BJ (cell line): ENCODE measurements at regions of chr12 and their contacts with region 1.

Region 1: GRCh38 chr12:108731866-108732461 is 646 bp upstream of the CORO1C start:
- DNase-seq: peak; percentile 84
- H3K4me3 ChIP-seq: peak overlapping the region; percentile 98
- H3K27me3 ChIP-seq: no peaks in the 10 kb centered on the region
- CTCF ChIP-seq: no peak

Region 2: DNA sequence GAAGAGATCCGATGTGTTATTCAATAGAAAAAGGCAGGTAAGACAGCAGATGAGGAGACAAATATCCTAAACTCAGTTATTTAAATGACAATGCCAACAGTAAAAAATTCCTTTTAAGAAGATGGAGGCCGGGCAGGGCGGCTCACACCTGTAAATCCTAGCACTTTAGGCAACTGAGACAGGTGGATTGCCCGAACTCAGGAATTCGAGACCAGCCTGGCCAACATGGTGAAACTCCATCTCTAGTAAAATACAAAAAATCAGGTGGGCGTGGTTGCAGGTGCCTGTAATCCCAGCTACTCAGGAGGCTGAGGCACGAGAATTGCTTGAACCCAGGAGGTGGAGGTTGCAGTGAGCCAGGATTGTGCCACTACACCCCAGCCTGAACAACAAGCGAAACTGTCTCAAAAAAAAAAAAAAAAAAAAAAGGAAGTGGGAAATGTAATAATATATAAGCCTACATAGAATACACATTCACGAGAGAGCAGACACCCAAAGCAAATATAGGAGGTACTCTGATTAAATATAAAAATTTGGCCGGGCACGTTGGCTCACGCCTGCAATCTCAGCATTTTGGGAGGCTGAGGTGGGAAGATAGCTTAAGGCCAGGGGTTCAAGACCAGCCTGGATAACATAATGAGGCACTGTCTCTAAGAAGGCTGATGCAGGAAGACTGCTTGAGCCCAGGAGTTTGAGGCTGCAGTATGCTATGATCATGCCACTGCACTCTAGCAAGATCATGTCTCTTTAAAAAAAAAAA is 19.6 kb before region 1 on chr12:
- CTCF ChIA-PET with region 1: no interaction called
- POLR2A ChIA-PET with region 1: no interaction called
- DNase-seq: no peak
- H3K4me3 ChIP-seq: no peak overlapping the region
- H3K27me3 ChIP-seq: no peaks in the 10 kb centered on the region
- CTCF ChIP-seq: no peak

Region 3: GRCh38 chr12:108744021-108744897 is 12.3 kb after region 1 on chr12:
- CTCF ChIA-PET with region 1: interaction called, 6 read pairs
- POLR2A ChIA-PET with region 1: interaction called, 12 read pairs
- DNase-seq: no peak
- H3K4me3 ChIP-seq: no peak overlapping the region
- H3K27me3 ChIP-seq: no peaks in the 10 kb centered on the region
- CTCF ChIP-seq: no peak

Region 4: DNA sequence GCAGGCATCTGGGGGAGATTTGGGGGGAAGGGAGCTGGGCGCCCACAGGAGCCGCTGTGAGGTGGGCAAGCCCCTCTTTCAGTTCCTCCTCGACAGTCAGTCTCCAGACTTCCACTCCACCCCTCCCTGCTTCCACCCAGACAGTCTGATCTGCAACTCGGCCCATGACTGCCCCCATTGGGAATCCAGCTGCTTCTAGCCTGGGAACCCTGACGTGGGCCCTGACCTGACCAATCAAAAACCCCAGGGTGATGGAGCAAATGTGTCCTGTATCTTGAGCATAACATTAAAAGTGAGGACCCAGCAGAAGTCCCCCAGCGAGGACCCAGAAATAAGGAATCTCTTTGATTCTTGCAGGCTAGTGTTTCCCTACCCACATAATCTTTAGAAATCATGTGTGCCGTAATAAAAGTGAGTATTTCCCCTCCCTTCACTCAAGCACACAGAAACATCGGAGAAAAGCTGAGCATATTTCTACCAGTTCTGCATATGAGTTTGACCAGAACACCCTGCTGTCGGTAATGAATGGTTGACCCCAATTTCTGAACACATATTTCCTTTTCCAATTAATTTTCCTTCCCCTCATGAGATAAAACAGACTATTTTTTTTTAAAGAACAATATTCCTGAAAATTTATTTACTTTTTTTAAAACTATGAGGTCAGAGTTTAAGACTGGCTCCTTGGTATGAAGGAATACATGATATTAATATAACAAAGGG is 119.0 kb after region 1 on chr12:
- CTCF ChIA-PET with region 1: interaction called, 3 read pairs
- POLR2A ChIA-PET with region 1: interaction called, 40 read pairs
- DNase-seq: no peak
- H3K4me3 ChIP-seq: no peak overlapping the region
- H3K27me3 ChIP-seq: no peaks in the 10 kb centered on the region
- CTCF ChIP-seq: no peak